Mucosa of descending colon (tissue), 3 donors: ENCODE measurements at regions of chr15 and their contacts with region 1.

Region 1: GRCh38 chr15:99059010-99059981 is 45.6 kb upstream of the SYNM start:
- DNase-seq: peak; percentile 56 to 72 (median 66)
- ATAC-seq: peak; percentile 95
- H3K4me3 ChIP-seq: no peak overlapping the region
- H3K4me1 ChIP-seq: peaks cover 7% of the 10 kb centered on the region
- CTCF ChIP-seq: peak; percentile 77

Region 2: GRCh38 chr15:98760112-98760826 is 299.0 kb before region 1 on chr15:
- intact Hi-C with region 1: no loop called
- DNase-seq: no peak
- ATAC-seq: no peak
- H3K4me3 ChIP-seq: no peak overlapping the region
- H3K4me1 ChIP-seq: no peaks in the 10 kb centered on the region
- CTCF ChIP-seq: no peak

Region 3: DNA sequence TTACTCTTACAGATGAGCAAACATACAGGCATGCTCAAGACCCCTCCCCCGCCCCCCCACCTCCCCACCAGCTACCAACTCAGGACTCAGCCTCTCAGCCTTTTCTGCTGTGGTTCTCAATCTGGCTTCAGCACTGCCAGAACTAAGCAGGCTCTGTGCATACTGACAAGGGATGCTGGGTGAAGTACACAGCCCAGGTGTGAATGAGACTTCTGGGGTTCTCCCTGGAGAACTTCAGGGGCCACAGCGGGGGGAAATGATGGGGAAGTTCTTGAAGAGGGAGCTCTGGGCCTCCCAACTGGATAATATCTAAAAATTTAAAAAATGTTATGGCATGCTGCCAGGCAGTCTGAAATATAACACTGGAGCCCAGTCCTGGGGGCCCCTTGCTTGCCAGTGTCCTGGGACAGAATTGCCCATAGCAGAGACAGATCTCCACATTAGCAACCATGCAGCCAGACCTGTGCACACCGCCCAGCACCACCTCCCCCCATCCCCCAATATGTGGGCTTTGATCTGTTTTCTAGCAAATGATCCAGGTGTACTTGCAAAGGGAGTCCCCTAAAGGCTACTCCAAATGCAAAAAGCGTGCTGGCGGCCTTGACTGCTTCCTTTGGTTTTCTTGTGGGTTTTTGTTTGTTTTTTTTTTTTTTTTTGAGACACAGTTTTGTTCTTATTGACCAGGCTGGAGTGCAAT is 93.1 kb before region 1 on chr15:
- intact Hi-C with region 1: loop called in 1 of 2 experiments (anchors 10 kb)
- DNase-seq: no peak
- ATAC-seq: no peak
- H3K4me3 ChIP-seq: no peak overlapping the region
- H3K4me1 ChIP-seq: no peaks in the 10 kb centered on the region
- CTCF ChIP-seq: no peak